G401 (cell line): ENCODE measurements at regions of chr1 and their contacts with region 1.

Region 1: DNA sequence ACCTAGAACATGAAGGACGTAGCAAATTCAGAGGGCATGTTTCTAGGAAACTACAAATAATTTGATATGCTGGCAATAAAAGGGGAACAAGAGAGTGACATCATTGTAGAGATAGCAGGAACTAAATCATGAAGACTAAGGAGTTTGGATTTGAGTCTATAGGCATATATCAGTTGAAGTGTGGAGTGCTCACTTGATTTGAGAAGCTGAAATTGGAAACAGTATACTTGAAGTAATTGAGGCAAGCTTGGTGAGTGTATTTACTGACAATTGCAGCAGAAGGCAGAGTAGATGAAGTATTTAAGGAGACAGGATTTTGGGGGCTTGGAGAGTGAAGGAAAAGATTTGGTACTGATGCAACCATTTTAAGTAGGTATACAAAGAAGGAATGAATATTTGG is 6.4 kb upstream of the TMCO2 start:
- DNase-seq: no peak

Region 2: GRCh38 chr1:40299366-40300248 is 58.2 kb after region 1 on chr1:
- in situ Hi-C with region 1: loop called (anchors 10 kb)
- DNase-seq: no peak

Region 3: DNA sequence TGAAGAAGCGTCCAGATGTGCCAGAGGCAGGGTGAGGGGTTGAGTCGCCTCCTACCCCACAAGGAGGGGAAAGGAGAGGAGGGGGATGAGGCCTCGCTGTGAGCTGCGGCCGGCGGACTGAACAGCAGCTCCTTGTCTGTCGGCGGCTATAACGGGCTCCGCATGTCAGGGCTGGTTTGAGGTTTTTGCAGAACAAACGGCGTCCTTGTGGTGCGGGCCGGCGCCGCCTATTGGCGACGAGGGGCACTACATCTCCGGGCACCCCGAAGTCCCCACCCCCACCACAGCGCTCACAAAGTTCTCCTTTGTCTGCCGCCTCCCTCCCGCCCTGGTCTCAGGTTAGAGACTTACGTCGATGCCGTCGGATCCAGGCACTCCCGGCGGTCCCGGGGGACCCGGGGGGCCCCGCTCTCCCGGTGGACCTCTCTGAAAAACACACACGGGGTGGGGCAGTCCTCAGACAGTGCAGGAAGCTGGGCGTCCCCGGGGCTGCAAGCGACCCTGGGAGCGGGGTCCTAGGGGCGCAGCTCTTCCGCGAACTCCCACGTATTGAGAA is 74.0 kb after region 1 on chr1:
- in situ Hi-C with region 1: no loop called
- DNase-seq: peak; percentile 60

Region 4: GRCh38 chr1:40373338-40374283 is 132.2 kb after region 1 on chr1 and contains the start of gene SMAP2:
- in situ Hi-C with region 1: no loop called
- DNase-seq: peak; percentile 96
- total RNA-seq, gene SMAP2: 15.0 and 21.9 TPM in 2 replicates